HCT116 (cell line): ENCODE measurements at regions of chr22 and their contacts with region 1.

Region 1: DNA sequence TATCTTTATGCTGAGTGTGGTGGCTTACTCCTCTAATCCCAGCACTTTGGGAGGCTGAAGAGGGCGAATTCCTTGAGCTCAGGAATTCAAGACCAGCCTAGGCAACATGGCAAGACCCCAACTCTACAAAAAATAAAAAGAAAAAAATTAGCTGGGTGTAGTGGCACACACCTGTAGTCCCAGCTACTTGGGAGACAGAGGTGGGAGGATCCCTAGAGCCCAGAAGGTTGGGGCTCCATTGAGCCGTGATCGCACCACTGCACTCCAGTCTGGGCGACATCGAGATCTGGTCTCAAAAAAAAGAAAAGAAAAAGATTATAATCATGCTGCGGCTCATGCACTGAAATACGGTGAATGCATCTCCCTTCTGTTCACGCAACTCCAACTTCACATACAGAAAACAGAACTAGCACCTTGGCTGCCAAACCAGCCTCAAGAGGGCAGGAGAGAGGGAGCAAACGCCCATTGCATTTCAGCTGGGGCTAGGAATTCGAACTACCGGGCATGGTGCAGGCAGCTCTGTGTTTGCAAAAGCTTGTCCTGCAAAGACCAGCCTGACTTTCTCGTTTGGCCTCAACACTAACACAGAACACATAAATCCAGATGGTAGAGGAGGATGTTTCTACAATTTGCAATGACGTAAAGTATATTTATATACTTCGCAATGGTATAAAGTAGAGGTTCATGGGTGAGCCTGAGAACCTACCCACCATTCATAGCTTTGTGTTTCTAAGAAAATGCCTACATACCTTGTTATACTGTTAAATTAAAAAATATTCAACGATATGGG is 6.3 kb upstream of the SYNGR1 start:
- DNase-seq: peak; percentile 36
- ATAC-seq: peak; percentile 97
- H3K4me3 ChIP-seq: peak overlapping the region in 1 of 2 experiments; percentile 37; a peak in 1 of 4 replicates
- H3K27ac ChIP-seq: no peak overlapping the region
- H3K4me1 ChIP-seq: peaks cover 12% of the 10 kb centered on the region in 2 experiments; a peak in 3 of 4 replicates
- H3K27me3 ChIP-seq: no peaks in the 10 kb centered on the region
- CTCF ChIP-seq: peak; percentile 64 to 93 (median 81)
- POLR2A ChIP-seq: no peak
- RAD21 ChIP-seq: peak; percentile 62

Region 2: GRCh38 chr22:37416827-37417226 is 1926.6 kb before region 1 on chr22:
- CTCF ChIA-PET with region 1: no interaction called
- POLR2A ChIA-PET with region 1: no interaction called
- RAD21 ChIA-PET with region 1: no interaction called
- intact Hi-C with region 1: no loop called
- DNase-seq: no peak
- ATAC-seq: no peak
- H3K4me3 ChIP-seq: no peak overlapping the region
- H3K27ac ChIP-seq: no peak overlapping the region
- H3K4me1 ChIP-seq: peaks cover 6 to 31% of the 10 kb centered on the region in 2 experiments; a peak in 3 of 4 replicates
- H3K27me3 ChIP-seq: no peaks in the 10 kb centered on the region
- CTCF ChIP-seq: no peak
- POLR2A ChIP-seq: no peak
- RAD21 ChIP-seq: no peak

Region 3: GRCh38 chr22:39332441-39333064 is 10.9 kb before region 1 on chr22:
- CTCF ChIA-PET with region 1: interaction called, 49 read pairs
- POLR2A ChIA-PET with region 1: interaction called, 7 read pairs
- RAD21 ChIA-PET with region 1: interaction called in 1 of 2 experiments, 3 read pairs
- intact Hi-C with region 1: no loop called
- DNase-seq: no peak
- ATAC-seq: no peak
- H3K4me3 ChIP-seq: no peak overlapping the region
- H3K27ac ChIP-seq: no peak overlapping the region
- H3K4me1 ChIP-seq: peaks cover 0 to 6% of the 10 kb centered on the region in 2 experiments; a peak in 2 of 4 replicates
- H3K27me3 ChIP-seq: no peaks in the 10 kb centered on the region
- CTCF ChIP-seq: no peak
- POLR2A ChIP-seq: no peak
- RAD21 ChIP-seq: no peak